ENCODE measurements at regions of chr5 and their contacts with region 1.

Region 1: DNA sequence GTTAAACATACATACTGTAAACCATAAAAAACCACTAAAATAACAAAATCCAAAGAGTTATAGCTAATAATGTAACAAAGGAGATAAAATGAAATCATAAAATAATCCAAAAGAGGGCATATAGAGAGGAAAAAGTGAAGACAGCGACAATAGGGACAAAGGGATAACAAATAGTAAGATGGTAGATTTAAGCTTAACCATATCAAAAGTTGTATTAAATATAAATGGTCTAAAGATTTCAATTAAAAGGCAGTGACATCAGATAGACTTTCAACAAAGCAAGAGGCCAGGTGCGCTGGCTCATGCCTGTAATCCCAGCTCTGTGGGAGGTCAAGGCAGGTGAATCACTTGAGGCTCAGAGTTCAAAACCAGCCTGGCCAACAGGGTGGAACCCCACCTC is 54.7 kb upstream of the SREK1 start:
- DNase-seq: no peak
- H3K4me3 ChIP-seq: no peak overlapping the region
- H3K27ac ChIP-seq: no peak overlapping the region
- H3K4me1 ChIP-seq: no peaks in the 10 kb centered on the region
- H3K27me3 ChIP-seq: no peaks in the 10 kb centered on the region
- CTCF ChIP-seq: no peak
- POLR2A ChIP-seq: no peak

Region 2: GRCh38 chr5:64140018-64140417 is 1949.4 kb before region 1 on chr5:
- intact Hi-C with region 1: no loop called
- DNase-seq: no peak
- H3K4me3 ChIP-seq: no peak overlapping the region
- H3K27ac ChIP-seq: no peak overlapping the region
- H3K4me1 ChIP-seq: no peaks in the 10 kb centered on the region
- H3K27me3 ChIP-seq: no peaks in the 10 kb centered on the region
- CTCF ChIP-seq: no peak
- POLR2A ChIP-seq: no peak

Region 3: GRCh38 chr5:66041627-66042026 is 47.8 kb before region 1 on chr5:
- intact Hi-C with region 1: loop called (anchors 5 kb)
- DNase-seq: no peak
- H3K4me3 ChIP-seq: no peak overlapping the region
- H3K27ac ChIP-seq: no peak overlapping the region
- H3K4me1 ChIP-seq: no peaks in the 10 kb centered on the region
- H3K27me3 ChIP-seq: no peaks in the 10 kb centered on the region
- CTCF ChIP-seq: no peak
- POLR2A ChIP-seq: no peak

Region 4: GRCh38 chr5:67301285-67301903 is 1212.0 kb after region 1 on chr5:
- intact Hi-C with region 1: no loop called
- DNase-seq: peak in 1 of 2 donors; percentile 57
- H3K4me3 ChIP-seq: no peak overlapping the region
- H3K27ac ChIP-seq: peak overlapping the region; percentile 64 to 90
- H3K4me1 ChIP-seq: peaks cover 0 to 7% of the 10 kb centered on the region in 2 donors
- H3K27me3 ChIP-seq: no peaks in the 10 kb centered on the region
- CTCF ChIP-seq: no peak
- POLR2A ChIP-seq: no peak